Transverse colon (tissue), 4 donors: ENCODE measurements at regions of chrX and their contacts with region 1.

Region 1: GRCh38 chrX:40377684-40378083 is 203.1 kb upstream of the ATP6AP2 start:
- DNase-seq: no peak
- H3K4me3 ChIP-seq: no peak overlapping the region
- H3K27ac ChIP-seq: no peak overlapping the region
- H3K4me1 ChIP-seq: no peaks in the 10 kb centered on the region
- H3K27me3 ChIP-seq: no peaks in the 10 kb centered on the region
- CTCF ChIP-seq: no peak
- EP300 ChIP-seq: no peak
- POLR2A ChIP-seq: no peak

Region 2: GRCh38 chrX:40343319-40343718 is 34.4 kb before region 1 on chrX:
- in situ Hi-C with region 1: no loop called
- intact Hi-C with region 1: loop called (anchors 1 kb)
- DNase-seq: no peak
- H3K4me3 ChIP-seq: no peak overlapping the region
- H3K27ac ChIP-seq: no peak overlapping the region
- H3K4me1 ChIP-seq: no peaks in the 10 kb centered on the region
- H3K27me3 ChIP-seq: no peaks in the 10 kb centered on the region
- CTCF ChIP-seq: no peak
- EP300 ChIP-seq: no peak
- POLR2A ChIP-seq: no peak

Region 3: GRCh38 chrX:40474200-40474626 is 96.5 kb after region 1 on chrX:
- in situ Hi-C with region 1: no loop called
- intact Hi-C with region 1: no loop called
- DNase-seq: no peak
- H3K4me3 ChIP-seq: no peak overlapping the region
- H3K27ac ChIP-seq: no peak overlapping the region
- H3K4me1 ChIP-seq: peaks cover 0 to 14% (median 4%) of the 10 kb centered on the region in 4 donors
- H3K27me3 ChIP-seq: no peaks in the 10 kb centered on the region
- CTCF ChIP-seq: no peak
- EP300 ChIP-seq: no peak
- POLR2A ChIP-seq: no peak

Region 4: GRCh38 chrX:41558531-41558930 is 1180.8 kb after region 1 on chrX:
- in situ Hi-C with region 1: no loop called
- intact Hi-C with region 1: no loop called
- DNase-seq: no peak
- H3K4me3 ChIP-seq: no peak overlapping the region
- H3K27ac ChIP-seq: peak overlapping the region in 1 of 4 donors; percentile 47
- H3K4me1 ChIP-seq: no peaks in the 10 kb centered on the region
- H3K27me3 ChIP-seq: no peaks in the 10 kb centered on the region
- CTCF ChIP-seq: peak in 4 of 5 experiments; percentile 9 to 18 (median 12)
- EP300 ChIP-seq: no peak
- POLR2A ChIP-seq: no peak